ENCODE measurements at regions of chr5 and their contacts with region 1.

Region 1: DNA sequence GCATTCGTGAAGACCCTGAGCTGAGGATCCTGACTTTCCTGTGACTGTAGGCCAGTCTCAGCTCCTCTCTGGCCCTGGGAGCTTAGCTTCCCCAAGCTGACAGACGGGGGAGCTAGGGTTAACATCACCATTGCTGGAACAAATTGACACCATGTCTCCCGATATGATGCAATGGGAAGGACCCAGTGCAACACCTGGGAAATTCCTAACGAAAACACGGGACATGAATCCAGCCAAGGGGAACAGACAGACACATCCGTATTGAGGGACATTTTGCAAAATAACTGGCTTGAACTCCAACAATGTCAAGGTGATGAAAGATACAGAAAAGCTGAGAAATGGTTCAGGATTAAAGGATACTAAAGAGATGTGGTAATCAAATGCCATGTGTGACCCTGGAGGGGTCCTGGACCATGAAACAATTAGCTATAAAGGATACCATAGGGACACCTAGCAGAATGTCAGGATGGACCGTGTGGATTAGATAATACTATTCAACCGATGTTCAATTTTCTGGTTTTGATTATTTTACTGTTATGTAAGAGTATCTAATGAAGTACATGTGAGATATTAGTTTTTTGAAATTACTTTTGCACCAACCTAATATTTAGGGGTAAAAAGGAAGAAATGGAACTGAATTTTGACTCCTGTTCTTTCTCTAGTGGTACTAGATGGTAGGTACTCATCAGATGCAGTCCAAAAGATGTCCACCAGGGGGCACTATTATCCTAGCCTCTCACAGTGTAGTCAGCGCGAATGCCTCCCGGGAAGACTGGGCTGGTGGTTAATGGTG is 52.7 kb downstream of the NDST1 start:
- DNase-seq: peak in 1 of 3 donors; percentile 98
- ATAC-seq: peak; percentile 92
- H3K4me3 ChIP-seq: no peak overlapping the region
- H3K4me1 ChIP-seq: peaks cover 3% of the 10 kb centered on the region
- CTCF ChIP-seq: peak; percentile 77

Region 2: GRCh38 chr5:150656191-150657132 is 95.9 kb after region 1 on chr5:
- intact Hi-C with region 1: loop called (anchors 2 to 5 kb)
- DNase-seq: peak; percentile 79 to 89 (median 79)
- ATAC-seq: peak; percentile 90
- H3K4me3 ChIP-seq: no peak overlapping the region
- H3K4me1 ChIP-seq: no peaks in the 10 kb centered on the region
- CTCF ChIP-seq: peak; percentile 86

Region 3: GRCh38 chr5:150846654-150847333 is 286.2 kb after region 1 on chr5:
- intact Hi-C with region 1: loop called (anchors 2 to 5 kb)
- DNase-seq: peak in 1 of 3 donors; percentile 84
- ATAC-seq: peak; percentile 96
- H3K4me3 ChIP-seq: no peak overlapping the region
- H3K4me1 ChIP-seq: no peaks in the 10 kb centered on the region
- CTCF ChIP-seq: peak; percentile 50

Measured in mucosa of descending colon (tissue), 3 donors.